Endothelial cell of umbilical vein (primary cell): ENCODE measurements at regions of chr5 and their contacts with region 1.

Region 1: GRCh38 chr5:137344723-137345322 is 154.3 kb downstream of the SPOCK1 start:
- DNase-seq: peak; percentile 76
- H3K4me3 ChIP-seq: no peak overlapping the region
- H3K27ac ChIP-seq: peak overlapping the region; percentile 7
- H3K4me1 ChIP-seq: peaks cover 55% of the 10 kb centered on the region
- H3K27me3 ChIP-seq: no peaks in the 10 kb centered on the region
- CTCF ChIP-seq: peak; percentile 73 to 85
- POLR2A ChIP-seq: no peak

Region 2: GRCh38 chr5:136802383-136802782 is 542.4 kb before region 1 on chr5:
- CTCF ChIA-PET with region 1: interaction called, 12 read pairs
- POLR2A ChIA-PET with region 1: no interaction called
- dilution Hi-C with region 1: no loop called
- intact Hi-C with region 1: loop called (anchors 2 kb)
- DNase-seq: peak; percentile 58
- H3K4me3 ChIP-seq: no peak overlapping the region
- H3K27ac ChIP-seq: no peak overlapping the region
- H3K4me1 ChIP-seq: no peaks in the 10 kb centered on the region
- H3K27me3 ChIP-seq: peaks cover 3 to 12% of the 10 kb centered on the region in 2 experiments
- CTCF ChIP-seq: no peak
- POLR2A ChIP-seq: no peak

Region 3: DNA sequence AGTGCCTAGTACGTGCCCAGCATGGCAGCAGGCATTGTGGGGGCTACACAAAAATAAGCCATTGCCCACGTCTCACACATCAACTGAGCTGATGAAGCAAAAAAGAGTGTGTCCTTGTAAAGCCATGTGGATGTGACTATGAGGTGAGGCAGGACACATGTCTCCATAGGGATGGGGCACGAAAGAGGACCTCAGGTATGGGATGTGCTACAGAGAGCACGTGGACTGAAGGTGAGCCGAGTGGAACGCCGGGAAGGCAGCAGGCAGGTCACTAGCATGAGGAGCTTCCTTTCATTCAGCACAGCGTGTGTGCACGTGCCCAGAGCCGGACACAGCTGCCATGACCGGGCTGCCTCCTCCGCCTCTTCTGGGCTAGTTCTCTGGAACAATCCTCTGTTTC is 275.5 kb before region 1 on chr5:
- CTCF ChIA-PET with region 1: no interaction called
- POLR2A ChIA-PET with region 1: no interaction called
- dilution Hi-C with region 1: no loop called
- intact Hi-C with region 1: no loop called
- DNase-seq: no peak
- H3K4me3 ChIP-seq: no peak overlapping the region
- H3K27ac ChIP-seq: no peak overlapping the region
- H3K4me1 ChIP-seq: peaks cover 30% of the 10 kb centered on the region
- H3K27me3 ChIP-seq: no peaks in the 10 kb centered on the region
- CTCF ChIP-seq: no peak
- POLR2A ChIP-seq: no peak

Region 4: GRCh38 chr5:137329586-137330296 is 15.1 kb before region 1 on chr5:
- CTCF ChIA-PET with region 1: interaction called, 25 read pairs
- POLR2A ChIA-PET with region 1: no interaction called
- dilution Hi-C with region 1: no loop called
- intact Hi-C with region 1: no loop called
- DNase-seq: no peak
- H3K4me3 ChIP-seq: no peak overlapping the region
- H3K27ac ChIP-seq: no peak overlapping the region
- H3K4me1 ChIP-seq: peaks cover 2% of the 10 kb centered on the region
- H3K27me3 ChIP-seq: no peaks in the 10 kb centered on the region
- CTCF ChIP-seq: no peak
- POLR2A ChIP-seq: no peak

Region 5: GRCh38 chr5:137361280-137361679 is 16.5 kb after region 1 on chr5:
- CTCF ChIA-PET with region 1: interaction called, 53 read pairs
- POLR2A ChIA-PET with region 1: no interaction called
- dilution Hi-C with region 1: no loop called
- intact Hi-C with region 1: loop called (anchors 1 kb)
- DNase-seq: peak; percentile 94
- H3K4me3 ChIP-seq: no peak overlapping the region
- H3K27ac ChIP-seq: peak overlapping the region; percentile 100
- H3K4me1 ChIP-seq: peaks cover 40% of the 10 kb centered on the region
- H3K27me3 ChIP-seq: no peaks in the 10 kb centered on the region
- CTCF ChIP-seq: no peak
- POLR2A ChIP-seq: peak; percentile 53

Region 6: GRCh38 chr5:137379555-137380286 is 34.9 kb after region 1 on chr5:
- CTCF ChIA-PET with region 1: interaction called, 13 read pairs
- POLR2A ChIA-PET with region 1: no interaction called
- dilution Hi-C with region 1: no loop called
- intact Hi-C with region 1: no loop called
- DNase-seq: no peak
- H3K4me3 ChIP-seq: no peak overlapping the region
- H3K27ac ChIP-seq: no peak overlapping the region
- H3K4me1 ChIP-seq: no peaks in the 10 kb centered on the region
- H3K27me3 ChIP-seq: no peaks in the 10 kb centered on the region
- CTCF ChIP-seq: no peak
- POLR2A ChIP-seq: no peak

Region 7: DNA sequence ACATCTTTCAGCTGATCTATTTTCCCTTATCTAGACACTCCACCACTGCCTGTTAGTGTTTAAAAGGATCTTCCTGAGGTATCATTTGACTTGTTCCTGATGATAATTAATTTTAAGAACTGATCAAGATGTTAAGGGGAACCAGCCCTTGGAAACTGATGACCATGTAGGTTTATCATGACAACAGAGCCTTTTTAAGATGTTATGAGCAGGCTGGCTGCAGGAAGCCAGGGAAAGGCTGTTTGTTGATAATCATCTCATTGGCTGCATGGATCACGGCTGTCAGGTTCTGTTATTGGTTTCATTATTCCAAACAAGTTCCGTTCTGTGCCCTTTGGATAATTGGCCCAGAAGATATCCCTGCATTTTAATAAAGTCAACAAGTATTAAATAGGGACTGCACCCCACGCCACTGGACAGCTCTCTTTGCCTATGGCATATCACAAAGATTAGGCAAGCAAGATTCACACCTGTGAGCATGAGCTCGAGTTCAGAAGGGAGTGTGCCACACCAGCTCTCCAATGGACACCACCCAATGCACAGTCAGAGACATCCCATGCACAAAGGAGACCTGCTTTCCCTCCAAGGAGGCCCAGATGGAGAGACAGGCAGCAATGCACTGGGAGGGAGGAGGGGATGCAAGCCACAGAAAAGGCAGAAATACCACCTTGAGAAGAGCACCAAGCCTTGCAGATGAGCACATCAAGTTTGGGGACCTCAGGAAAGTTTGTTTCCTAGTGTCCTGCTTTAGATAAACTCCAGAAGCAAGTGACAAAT is 65.6 kb after region 1 on chr5:
- CTCF ChIA-PET with region 1: interaction called, 14 read pairs
- POLR2A ChIA-PET with region 1: no interaction called
- dilution Hi-C with region 1: no loop called
- intact Hi-C with region 1: no loop called
- DNase-seq: no peak
- H3K4me3 ChIP-seq: no peak overlapping the region
- H3K27ac ChIP-seq: no peak overlapping the region
- H3K4me1 ChIP-seq: peaks cover 7% of the 10 kb centered on the region
- H3K27me3 ChIP-seq: no peaks in the 10 kb centered on the region
- CTCF ChIP-seq: no peak
- POLR2A ChIP-seq: no peak

Region 8: GRCh38 chr5:137605411-137605810 is 260.6 kb after region 1 on chr5:
- CTCF ChIA-PET with region 1: interaction called, 11 read pairs
- POLR2A ChIA-PET with region 1: no interaction called
- dilution Hi-C with region 1: no loop called
- intact Hi-C with region 1: no loop called
- DNase-seq: peak; percentile 29
- H3K4me3 ChIP-seq: no peak overlapping the region
- H3K27ac ChIP-seq: no peak overlapping the region
- H3K4me1 ChIP-seq: no peaks in the 10 kb centered on the region
- H3K27me3 ChIP-seq: peaks cover 33% of the 10 kb centered on the region in 2 experiments
- CTCF ChIP-seq: peak in 1 of 2 donors; percentile 15
- POLR2A ChIP-seq: no peak